CD4-positive, alpha-beta T cell (primary cell): ENCODE measurements at regions of chr12 and their contacts with region 1.

Region 1: GRCh38 chr12:117874842-117875434 is 93.9 kb downstream of the KSR2 start:
- DNase-seq: peak; percentile 41 to 76 (median 51)
- ATAC-seq: peak; percentile 59
- H3K4me3 ChIP-seq: no peak overlapping the region
- H3K4me3 Mint-ChIP-seq: no peak overlapping the region
- H3K27ac ChIP-seq: peak overlapping the region in 1 of 2 donors; percentile 35
- H3K27ac Mint-ChIP-seq: peak overlapping the region; percentile 43
- H3K4me1 ChIP-seq: peaks cover 16% of the 10 kb centered on the region
- H3K4me1 Mint-ChIP-seq: peaks cover 6% of the 10 kb centered on the region
- H3K27me3 ChIP-seq: peaks cover 7 to 14% of the 10 kb centered on the region in 2 experiments
- H3K27me3 Mint-ChIP-seq: peaks cover 30% of the 10 kb centered on the region
- CTCF ChIP-seq: peak; percentile 80

Region 2: GRCh38 chr12:117850048-117850447 is 24.9 kb before region 1 on chr12:
- CTCF ChIA-PET with region 1: no interaction called
- POLR2A ChIA-PET with region 1: no interaction called
- intact Hi-C with region 1: no loop called
- DNase-seq: peak in 2 of 14 experiments; percentile 41
- ATAC-seq: no peak
- H3K4me3 ChIP-seq: no peak overlapping the region
- H3K4me3 Mint-ChIP-seq: no peak overlapping the region
- H3K27ac ChIP-seq: no peak overlapping the region
- H3K27ac Mint-ChIP-seq: no peak overlapping the region
- H3K4me1 ChIP-seq: no peaks in the 10 kb centered on the region
- H3K4me1 Mint-ChIP-seq: no peaks in the 10 kb centered on the region
- H3K27me3 ChIP-seq: peaks cover 4 to 6% of the 10 kb centered on the region in 2 experiments
- H3K27me3 Mint-ChIP-seq: peaks cover 47% of the 10 kb centered on the region
- CTCF ChIP-seq: peak; percentile 63

Region 3: GRCh38 chr12:118035246-118036041 is 160.5 kb after region 1 on chr12:
- CTCF ChIA-PET with region 1: interaction called, 9 read pairs
- POLR2A ChIA-PET with region 1: interaction called, 4 read pairs
- intact Hi-C with region 1: loop called (anchors 2 to 5 kb)
- DNase-seq: no peak
- ATAC-seq: no peak
- H3K4me3 ChIP-seq: no peak overlapping the region
- H3K4me3 Mint-ChIP-seq: no peak overlapping the region
- H3K27ac ChIP-seq: peak overlapping the region in 1 of 2 donors; percentile 31
- H3K27ac Mint-ChIP-seq: no peak overlapping the region
- H3K4me1 ChIP-seq: no peaks in the 10 kb centered on the region
- H3K4me1 Mint-ChIP-seq: no peaks in the 10 kb centered on the region
- H3K27me3 ChIP-seq: no peaks in the 10 kb centered on the region
- H3K27me3 Mint-ChIP-seq: no peaks in the 10 kb centered on the region
- CTCF ChIP-seq: no peak

Region 4: DNA sequence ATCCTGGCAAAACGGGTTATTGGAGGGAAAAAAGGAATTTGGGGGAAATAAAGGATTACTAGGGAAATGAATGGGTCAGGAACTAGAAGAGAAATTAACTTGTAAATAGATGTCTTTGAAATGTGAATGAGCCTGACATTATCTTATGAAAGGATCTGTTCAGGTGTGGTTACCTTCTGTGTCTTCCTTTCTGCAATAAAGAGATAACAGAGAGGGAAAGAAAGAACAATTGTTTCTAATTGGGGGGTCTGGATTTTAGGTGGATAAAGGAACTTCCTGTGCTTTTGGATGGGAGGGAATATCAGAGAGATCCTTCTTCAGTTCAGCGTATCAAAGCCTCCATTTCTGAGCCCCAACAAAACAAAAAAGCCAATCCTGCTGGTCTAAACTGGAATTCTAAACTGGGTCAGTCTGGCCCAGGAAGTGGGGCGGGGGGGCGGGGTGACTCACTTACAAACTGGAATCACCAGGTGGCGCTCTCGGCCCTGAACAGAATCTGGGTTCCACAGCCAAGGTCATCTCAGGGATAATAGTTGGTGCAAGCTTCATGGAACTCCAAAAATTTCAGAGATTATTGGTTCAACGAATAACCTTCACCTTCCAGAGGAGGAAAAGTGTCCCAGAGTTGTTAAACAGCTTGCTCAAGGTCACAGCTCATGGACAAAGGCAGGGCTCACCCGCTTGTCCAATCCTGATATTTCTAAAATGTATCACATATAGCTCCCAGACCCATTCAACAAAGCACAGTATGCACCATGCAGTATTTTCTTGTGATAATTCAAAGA is 245.8 kb after region 1 on chr12:
- CTCF ChIA-PET with region 1: no interaction called
- POLR2A ChIA-PET with region 1: no interaction called
- intact Hi-C with region 1: loop called in 1 of 2 experiments (anchors 10 kb)
- DNase-seq: peak; percentile 35 to 81 (median 54)
- ATAC-seq: peak; percentile 67
- H3K4me3 ChIP-seq: no peak overlapping the region
- H3K4me3 Mint-ChIP-seq: no peak overlapping the region
- H3K27ac ChIP-seq: peak overlapping the region in 1 of 2 donors; percentile 6
- H3K27ac Mint-ChIP-seq: peak overlapping the region; percentile 62
- H3K4me1 ChIP-seq: peaks cover 6% of the 10 kb centered on the region
- H3K4me1 Mint-ChIP-seq: peaks cover 11% of the 10 kb centered on the region
- H3K27me3 ChIP-seq: no peaks in the 10 kb centered on the region
- H3K27me3 Mint-ChIP-seq: no peaks in the 10 kb centered on the region
- CTCF ChIP-seq: peak; percentile 82